ENCODE measurements at regions of chr18 and their contacts with region 1.

Region 1: GRCh38 chr18:8367217-8367988 is 241.8 kb upstream of the RAB12 start:
- DNase-seq: peak in 7 of 14 experiments; percentile 1 to 52 (median 13)
- ATAC-seq: peak; percentile 77
- H3K4me3 ChIP-seq: peak overlapping the region; percentile 47
- H3K4me3 Mint-ChIP-seq: peak overlapping the region; percentile 78
- H3K27ac ChIP-seq: no peak overlapping the region
- H3K27ac Mint-ChIP-seq: no peak overlapping the region
- H3K4me1 ChIP-seq: peaks cover 5% of the 10 kb centered on the region
- H3K4me1 Mint-ChIP-seq: no peaks in the 10 kb centered on the region
- H3K27me3 ChIP-seq: peaks cover 0 to 6% of the 10 kb centered on the region in 2 experiments
- H3K27me3 Mint-ChIP-seq: peaks cover 14% of the 10 kb centered on the region
- CTCF ChIP-seq: peak; percentile 49

Region 2: GRCh38 chr18:6807515-6808257 is 1559.7 kb before region 1 on chr18:
- CTCF ChIA-PET with region 1: no interaction called
- POLR2A ChIA-PET with region 1: no interaction called
- intact Hi-C with region 1: no loop called
- DNase-seq: no peak
- ATAC-seq: no peak
- H3K4me3 ChIP-seq: no peak overlapping the region
- H3K4me3 Mint-ChIP-seq: no peak overlapping the region
- H3K27ac ChIP-seq: no peak overlapping the region
- H3K27ac Mint-ChIP-seq: no peak overlapping the region
- H3K4me1 ChIP-seq: no peaks in the 10 kb centered on the region
- H3K4me1 Mint-ChIP-seq: no peaks in the 10 kb centered on the region
- H3K27me3 ChIP-seq: no peaks in the 10 kb centered on the region
- H3K27me3 Mint-ChIP-seq: peaks cover 4% of the 10 kb centered on the region
- CTCF ChIP-seq: no peak

Region 3: DNA sequence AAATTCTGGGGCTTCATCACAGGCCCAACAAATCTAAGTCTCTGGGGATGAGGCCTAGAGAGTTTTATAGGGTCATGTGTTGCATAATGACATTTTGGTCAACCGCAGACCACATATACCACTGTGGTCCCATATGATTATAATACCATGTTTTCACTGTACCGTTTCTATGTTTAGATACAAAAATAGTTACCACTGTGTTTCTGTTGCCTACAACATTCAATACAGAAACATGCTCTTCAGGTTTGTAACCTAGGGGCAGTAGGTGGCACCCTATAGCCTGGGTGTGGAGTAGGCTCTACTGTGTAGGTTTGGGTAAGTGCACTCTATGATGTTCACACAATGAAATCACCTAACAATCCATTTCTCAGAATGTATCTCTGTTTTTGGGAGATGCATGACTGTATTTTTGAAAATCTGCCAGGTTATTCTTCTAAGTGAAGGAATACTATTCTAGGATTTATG is 315.1 kb before region 1 on chr18:
- CTCF ChIA-PET with region 1: no interaction called
- POLR2A ChIA-PET with region 1: no interaction called
- intact Hi-C with region 1: loop called in 1 of 2 experiments (anchors 5 kb)
- DNase-seq: peak in 4 of 14 experiments; percentile 16 to 59 (median 49)
- ATAC-seq: peak; percentile 84
- H3K4me3 ChIP-seq: no peak overlapping the region
- H3K4me3 Mint-ChIP-seq: no peak overlapping the region
- H3K27ac ChIP-seq: no peak overlapping the region
- H3K27ac Mint-ChIP-seq: peak overlapping the region; percentile 82
- H3K4me1 ChIP-seq: no peaks in the 10 kb centered on the region
- H3K4me1 Mint-ChIP-seq: peaks cover 45% of the 10 kb centered on the region
- H3K27me3 ChIP-seq: no peaks in the 10 kb centered on the region
- H3K27me3 Mint-ChIP-seq: no peaks in the 10 kb centered on the region
- CTCF ChIP-seq: no peak

Measured in CD4-positive, alpha-beta T cell (primary cell).